ENCODE measurements at regions of chr12 and their contacts with region 1.

Region 1: GRCh38 chr12:121060149-121061001 is 21.3 kb upstream of the OASL start:
- DNase-seq: peak; percentile 66
- ATAC-seq: peak; percentile 96
- H3K4me3 Mint-ChIP-seq: peak overlapping the region; percentile 88
- H3K27ac Mint-ChIP-seq: peak overlapping the region; percentile 99
- H3K4me1 Mint-ChIP-seq: peaks cover 21% of the 10 kb centered on the region
- H3K27me3 Mint-ChIP-seq: peaks cover 3% of the 10 kb centered on the region

Region 2: GRCh38 chr12:120457133-120457532 is 603.2 kb before region 1 on chr12:
- POLR2A ChIA-PET with region 1: no interaction called
- DNase-seq: no peak
- ATAC-seq: no peak
- H3K4me3 Mint-ChIP-seq: no peak overlapping the region
- H3K27ac Mint-ChIP-seq: no peak overlapping the region
- H3K4me1 Mint-ChIP-seq: peaks cover 1% of the 10 kb centered on the region
- H3K27me3 Mint-ChIP-seq: no peaks in the 10 kb centered on the region

Region 3: GRCh38 chr12:121033625-121034349 is 26.6 kb before region 1 on chr12:
- POLR2A ChIA-PET with region 1: interaction called, 35 read pairs
- DNase-seq: no peak
- ATAC-seq: peak; percentile 60
- H3K4me3 Mint-ChIP-seq: peak overlapping the region; percentile 48
- H3K27ac Mint-ChIP-seq: peak overlapping the region; percentile 88
- H3K4me1 Mint-ChIP-seq: peaks cover 40% of the 10 kb centered on the region
- H3K27me3 Mint-ChIP-seq: no peaks in the 10 kb centered on the region

Region 4: GRCh38 chr12:121038861-121039666 is 21.3 kb before region 1 on chr12 and contains the start of gene OASL:
- POLR2A ChIA-PET with region 1: interaction called, 35 read pairs
- DNase-seq: peak; percentile 78
- ATAC-seq: peak; percentile 86
- H3K4me3 Mint-ChIP-seq: peak within 1 kb of the TSS; percentile 98
- H3K27ac Mint-ChIP-seq: peak within 1 kb of the TSS; percentile 98
- H3K4me1 Mint-ChIP-seq: peaks cover 33% of the 10 kb centered on the region
- H3K27me3 Mint-ChIP-seq: peaks cover 15% of the 10 kb centered on the region
- total RNA-seq, gene OASL: 43.7 to 48.6 TPM

Region 5: DNA sequence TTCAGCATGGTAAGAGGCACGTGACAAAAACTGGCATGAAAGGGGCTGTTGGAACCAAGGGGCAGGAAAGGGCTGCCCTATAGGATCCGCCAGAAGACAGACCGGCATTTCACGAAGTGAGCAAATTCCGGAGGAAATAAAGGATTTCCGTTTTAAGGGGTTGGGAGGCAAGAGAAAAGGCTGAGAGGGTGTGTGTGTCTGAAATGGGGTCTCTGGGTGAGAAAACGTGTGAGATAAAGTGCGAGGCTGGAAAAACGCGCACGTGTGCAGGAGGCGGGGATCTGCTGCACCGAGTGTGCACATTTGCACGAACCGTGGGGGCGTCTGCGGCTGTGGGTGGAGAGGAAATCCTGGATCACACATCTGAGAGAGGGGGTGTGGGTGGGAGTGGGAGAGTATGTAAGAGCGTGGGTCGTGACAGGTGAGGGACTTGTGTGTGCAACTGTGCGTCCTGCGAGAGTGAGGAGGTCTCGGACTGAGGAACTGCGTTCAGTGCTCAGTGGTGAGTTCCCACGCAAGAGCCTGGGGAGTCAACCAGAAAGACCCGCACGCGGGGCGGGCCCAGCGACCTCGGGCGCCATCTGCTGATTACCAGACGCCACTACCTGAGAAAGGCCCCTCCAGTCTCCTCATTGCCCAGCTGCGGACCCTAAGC is 35.3 kb after region 1 on chr12:
- POLR2A ChIA-PET with region 1: interaction called, 18 read pairs
- DNase-seq: peak; percentile 84
- ATAC-seq: peak; percentile 74
- H3K4me3 Mint-ChIP-seq: peak overlapping the region; percentile 92
- H3K27ac Mint-ChIP-seq: peak overlapping the region; percentile 89
- H3K4me1 Mint-ChIP-seq: peaks cover 31% of the 10 kb centered on the region
- H3K27me3 Mint-ChIP-seq: peaks cover 8% of the 10 kb centered on the region

Region 6: GRCh38 chr12:121223292-121224285 is 163.2 kb after region 1 on chr12:
- POLR2A ChIA-PET with region 1: interaction called, 11 read pairs
- DNase-seq: peak; percentile 71
- ATAC-seq: peak; percentile 68
- H3K4me3 Mint-ChIP-seq: peak overlapping the region; percentile 69
- H3K27ac Mint-ChIP-seq: peak overlapping the region; percentile 95
- H3K4me1 Mint-ChIP-seq: peaks cover 38% of the 10 kb centered on the region
- H3K27me3 Mint-ChIP-seq: no peaks in the 10 kb centered on the region

Measured in activated naive CD8-positive, alpha-beta T cell treated with anti-CD3 and anti-CD28 coated beads, Interleukin-2, amount 10 ng/mL, durations not matched to agents 7 days and 5 days (primary cell).